Mammary epithelial cell (primary cell): ENCODE measurements at regions of chr10 and their contacts with region 1.

Region 1: DNA sequence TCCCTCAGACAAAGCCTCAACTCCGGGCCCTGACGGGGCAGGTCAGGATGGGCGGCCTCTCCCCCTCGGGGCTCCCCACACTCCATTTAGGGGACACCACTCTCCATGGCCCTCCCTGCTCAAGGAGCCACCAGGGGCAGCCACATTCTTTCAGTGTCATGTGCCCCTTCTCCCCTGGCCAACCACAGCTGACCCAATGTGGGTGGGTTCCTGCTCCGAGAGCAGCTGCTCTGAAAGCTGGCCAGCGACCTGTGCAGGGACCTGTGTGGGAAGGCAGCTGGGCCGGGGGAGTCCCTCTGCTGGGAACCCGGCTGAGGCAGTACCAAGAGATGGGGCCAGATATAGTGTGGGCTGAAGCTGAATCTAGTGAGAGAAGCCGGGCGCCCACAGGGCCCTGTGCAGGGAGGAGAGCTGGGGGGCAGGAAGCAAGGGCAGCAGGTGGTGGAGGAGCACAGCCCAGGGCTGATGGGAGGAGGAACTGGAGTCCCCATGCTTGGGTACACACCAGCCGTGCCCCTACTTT is 40.6 kb upstream of the NPFFR1 start:
- DNase-seq: no peak
- H3K4me3 ChIP-seq: no peak overlapping the region
- H3K27ac ChIP-seq: no peak overlapping the region
- H3K4me1 ChIP-seq: no peaks in the 10 kb centered on the region
- H3K27me3 ChIP-seq: no peaks in the 10 kb centered on the region
- CTCF ChIP-seq: no peak

Region 2: GRCh38 chr10:70241081-70241480 is 83.3 kb before region 1 on chr10:
- CTCF ChIA-PET with region 1: no interaction called
- dilution Hi-C with region 1: loop called (anchors 5 kb)
- in situ Hi-C with region 1: no loop called
- intact Hi-C with region 1: no loop called
- DNase-seq: no peak
- H3K4me3 ChIP-seq: no peak overlapping the region
- H3K27ac ChIP-seq: no peak overlapping the region
- H3K4me1 ChIP-seq: no peaks in the 10 kb centered on the region
- H3K27me3 ChIP-seq: no peaks in the 10 kb centered on the region
- CTCF ChIP-seq: no peak